OCI-LY7 (cell line): ENCODE measurements at regions of chr11 and their contacts with region 1.

Region 1: DNA sequence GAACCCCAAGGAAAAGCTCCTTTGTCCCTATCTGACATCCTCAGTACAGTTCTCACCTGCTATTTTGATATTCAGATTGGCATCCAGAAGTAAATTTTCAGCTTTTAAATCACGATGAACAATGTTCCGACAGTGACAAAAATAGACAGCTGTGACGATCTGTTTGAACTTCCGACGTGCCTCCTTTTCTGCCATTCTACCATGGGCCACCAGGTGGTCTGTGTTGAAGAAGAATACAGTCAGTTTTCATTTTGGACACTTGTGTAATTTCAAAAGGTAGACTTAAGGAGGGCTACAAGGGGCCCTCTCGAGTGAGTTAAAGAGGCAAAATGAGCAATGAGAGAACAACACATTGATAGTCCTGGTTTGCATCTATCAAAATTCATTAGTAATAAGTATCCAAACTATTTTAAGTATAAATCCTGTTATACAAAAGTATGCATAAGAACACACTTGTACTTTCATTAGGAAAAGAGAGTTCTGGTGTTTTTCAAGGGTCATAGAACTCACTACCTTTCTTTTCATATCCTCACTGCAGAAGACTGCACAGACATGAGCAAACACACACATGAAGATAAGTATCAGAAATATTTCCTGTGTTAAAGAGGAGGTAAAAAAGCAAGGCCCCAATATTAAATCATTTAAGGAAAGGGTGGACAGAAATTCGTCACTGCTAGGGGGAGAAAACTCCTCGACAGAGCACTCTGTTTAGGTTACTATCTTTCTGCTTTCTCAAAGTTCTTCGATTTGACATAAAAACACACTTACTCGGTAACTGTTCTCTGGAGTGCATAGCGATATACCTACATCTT is 89.9 kb upstream of the APOA1 start:
- DNase-seq: peak; percentile 88
- H3K4me3 ChIP-seq: peak overlapping the region; percentile 60
- H3K27ac ChIP-seq: peak overlapping the region; percentile 97
- H3K4me1 ChIP-seq: peaks cover 93% of the 10 kb centered on the region
- CTCF ChIP-seq: peak; percentile 82

Region 2: GRCh38 chr11:116725434-116726221 is 201.7 kb before region 1 on chr11:
- CTCF ChIA-PET with region 1: no interaction called
- POLR2A ChIA-PET with region 1: no interaction called
- intact Hi-C with region 1: no loop called
- DNase-seq: no peak
- H3K4me3 ChIP-seq: no peak overlapping the region
- H3K27ac ChIP-seq: no peak overlapping the region
- H3K4me1 ChIP-seq: no peaks in the 10 kb centered on the region
- CTCF ChIP-seq: no peak

Region 3: DNA sequence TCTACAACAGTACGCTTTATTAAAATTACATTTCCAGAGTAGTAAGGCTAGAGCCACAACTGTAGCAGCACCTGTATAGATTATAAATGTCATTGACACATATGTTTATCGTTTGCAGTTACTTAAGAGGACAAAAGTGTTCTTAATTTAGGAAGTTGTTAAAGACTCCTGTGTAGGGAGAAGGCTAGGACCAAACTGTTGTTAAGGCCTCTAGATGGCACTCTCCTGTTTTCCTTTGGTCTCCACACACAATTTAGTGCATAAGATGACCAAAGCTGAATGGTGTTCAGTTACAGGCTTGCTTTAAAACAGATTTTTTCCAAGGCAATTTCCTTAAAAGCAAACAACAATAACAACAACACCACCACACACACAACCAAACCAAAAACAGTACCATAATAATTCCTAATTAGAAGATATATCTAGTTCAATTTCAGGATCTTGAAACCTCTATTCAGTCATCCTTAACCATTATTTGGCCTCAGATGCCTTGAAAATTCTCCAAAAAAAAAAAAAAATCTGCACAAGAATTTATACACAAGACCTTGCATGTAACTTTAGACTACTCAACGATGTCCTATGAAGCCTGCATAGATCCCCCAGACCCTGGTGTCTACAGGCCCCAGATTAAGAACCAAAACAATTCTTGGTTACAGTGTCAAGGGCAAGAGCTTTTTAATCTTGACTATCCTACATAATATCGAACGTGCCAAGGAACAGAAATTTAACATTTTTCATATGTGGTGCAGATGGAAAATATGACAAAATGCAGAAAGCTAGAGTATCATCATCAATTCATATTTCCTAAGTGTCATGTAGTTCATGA is 47.4 kb before region 1 on chr11:
- CTCF ChIA-PET with region 1: interaction called, 3 read pairs
- POLR2A ChIA-PET with region 1: interaction called, 7 read pairs
- intact Hi-C with region 1: loop called (anchors 5 kb)
- DNase-seq: peak; percentile 81
- H3K4me3 ChIP-seq: no peak overlapping the region
- H3K27ac ChIP-seq: no peak overlapping the region
- H3K4me1 ChIP-seq: peaks cover 7% of the 10 kb centered on the region
- CTCF ChIP-seq: peak; percentile 96

Region 4: DNA sequence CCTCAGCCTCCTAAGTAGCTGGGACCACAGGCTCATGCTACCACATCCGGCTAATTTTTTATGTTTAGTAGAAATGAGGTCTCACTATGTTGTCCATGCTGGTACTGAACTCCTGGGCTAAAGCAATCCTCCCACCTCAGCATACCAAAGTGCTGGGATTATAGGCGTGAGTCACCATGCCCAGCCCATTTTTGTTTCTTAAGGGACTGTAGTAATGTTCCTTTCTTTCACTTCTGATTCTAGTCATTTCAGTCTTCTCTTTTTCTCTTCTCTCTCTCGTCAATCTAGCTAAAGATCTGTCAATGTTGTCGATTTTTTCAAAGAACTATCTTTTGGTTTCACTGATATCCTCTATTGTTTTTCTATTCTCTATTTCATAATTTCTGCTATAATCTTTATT is 21.0 kb after region 1 on chr11:
- CTCF ChIA-PET with region 1: interaction called, 4 read pairs
- POLR2A ChIA-PET with region 1: interaction called, 90 read pairs
- intact Hi-C with region 1: no loop called
- DNase-seq: no peak
- H3K4me3 ChIP-seq: no peak overlapping the region
- H3K27ac ChIP-seq: no peak overlapping the region
- H3K4me1 ChIP-seq: peaks cover 36% of the 10 kb centered on the region
- CTCF ChIP-seq: no peak

Region 5: DNA sequence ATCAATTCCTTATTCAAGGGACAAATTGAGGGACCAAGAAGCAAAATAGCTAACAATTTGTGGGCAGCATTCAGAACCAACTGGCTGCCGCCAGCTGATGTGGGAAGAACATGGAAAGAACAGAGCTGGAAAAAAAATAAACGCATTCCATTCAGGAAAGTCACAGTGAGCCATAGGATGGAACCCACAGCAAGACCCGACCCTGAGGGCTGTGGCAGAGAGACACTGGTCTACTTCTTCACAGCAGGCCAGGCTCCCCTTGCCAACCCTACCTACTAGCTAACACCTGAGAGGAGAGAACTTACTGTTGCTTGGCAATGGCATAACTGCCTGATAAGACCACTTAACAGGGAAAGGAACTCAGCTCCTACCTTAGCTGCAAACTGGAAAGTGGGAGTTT is 33.6 kb after region 1 on chr11:
- CTCF ChIA-PET with region 1: interaction called, 7 read pairs
- POLR2A ChIA-PET with region 1: interaction called, 90 read pairs
- intact Hi-C with region 1: no loop called
- DNase-seq: peak; percentile 14
- H3K4me3 ChIP-seq: no peak overlapping the region
- H3K27ac ChIP-seq: no peak overlapping the region
- H3K4me1 ChIP-seq: peaks cover 67% of the 10 kb centered on the region
- CTCF ChIP-seq: no peak

Region 6: GRCh38 chr11:117076941-117077691 is 149.7 kb after region 1 on chr11:
- CTCF ChIA-PET with region 1: no interaction called
- POLR2A ChIA-PET with region 1: interaction called, 14 read pairs
- intact Hi-C with region 1: no loop called
- DNase-seq: peak; percentile 31
- H3K4me3 ChIP-seq: no peak overlapping the region
- H3K27ac ChIP-seq: no peak overlapping the region
- H3K4me1 ChIP-seq: peaks cover 36% of the 10 kb centered on the region
- CTCF ChIP-seq: no peak

Region 7: DNA sequence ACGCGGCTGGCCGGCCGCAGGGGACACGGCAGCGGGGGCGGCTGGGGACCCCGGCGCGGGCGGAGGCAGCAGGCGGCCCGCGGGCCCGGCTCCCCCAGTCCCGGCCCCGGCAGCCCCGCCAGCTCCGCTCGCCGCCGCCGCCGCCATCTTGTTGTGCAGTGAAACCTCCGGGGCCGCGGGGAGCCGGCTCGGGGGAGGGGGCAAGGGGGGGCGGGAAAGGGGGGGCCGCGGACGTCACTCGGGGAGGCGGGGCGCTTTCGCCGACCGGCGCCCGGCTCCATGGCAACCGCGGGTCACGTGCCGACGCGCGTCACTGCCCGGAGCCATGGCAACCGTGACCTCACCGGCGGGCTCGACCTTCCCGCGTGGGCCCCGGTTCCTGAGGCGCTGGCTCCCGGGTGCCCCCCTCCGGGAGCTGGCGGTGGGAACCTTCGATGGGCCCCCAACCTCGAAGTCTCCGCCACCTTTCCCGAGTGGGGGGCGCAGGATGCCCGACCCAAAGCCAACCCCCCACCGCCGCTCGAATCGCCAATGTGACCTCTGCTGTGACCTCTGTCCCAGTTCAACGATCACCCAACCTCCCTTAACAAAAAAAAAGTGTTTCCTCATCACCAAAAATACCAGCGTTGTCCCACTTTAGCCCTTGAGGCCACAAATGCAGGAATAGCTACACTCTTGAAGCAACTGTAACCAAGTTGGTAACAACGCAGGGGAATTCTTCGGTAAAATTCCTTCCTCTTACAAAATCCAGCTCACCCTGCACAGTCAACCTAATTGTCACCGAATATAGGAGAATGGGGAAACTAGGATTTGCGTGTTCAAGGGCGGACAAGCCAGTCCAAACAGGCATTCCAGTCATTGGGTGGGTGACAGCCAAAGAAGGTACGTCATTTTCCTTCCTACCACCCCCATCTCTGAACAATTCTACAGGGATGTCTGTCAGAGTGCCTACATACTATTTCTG is 171.2 kb after region 1 on chr11 and contains the start of gene SIK3:
- CTCF ChIA-PET with region 1: interaction called, 6 read pairs
- POLR2A ChIA-PET with region 1: interaction called, 28 read pairs
- intact Hi-C with region 1: loop called (anchors 1 kb)
- DNase-seq: peak; percentile 96
- H3K4me3 ChIP-seq: peak within 1 kb of the TSS; percentile 86
- H3K27ac ChIP-seq: peak within 1 kb of the TSS; percentile 68
- H3K4me1 ChIP-seq: peaks cover 37% of the 10 kb centered on the region
- CTCF ChIP-seq: peak; percentile 63
- total RNA-seq, gene SIK3: 29.3 and 37.2 TPM in 2 replicates